ENCODE measurements at regions of chr5 and their contacts with region 1.

Region 1: DNA sequence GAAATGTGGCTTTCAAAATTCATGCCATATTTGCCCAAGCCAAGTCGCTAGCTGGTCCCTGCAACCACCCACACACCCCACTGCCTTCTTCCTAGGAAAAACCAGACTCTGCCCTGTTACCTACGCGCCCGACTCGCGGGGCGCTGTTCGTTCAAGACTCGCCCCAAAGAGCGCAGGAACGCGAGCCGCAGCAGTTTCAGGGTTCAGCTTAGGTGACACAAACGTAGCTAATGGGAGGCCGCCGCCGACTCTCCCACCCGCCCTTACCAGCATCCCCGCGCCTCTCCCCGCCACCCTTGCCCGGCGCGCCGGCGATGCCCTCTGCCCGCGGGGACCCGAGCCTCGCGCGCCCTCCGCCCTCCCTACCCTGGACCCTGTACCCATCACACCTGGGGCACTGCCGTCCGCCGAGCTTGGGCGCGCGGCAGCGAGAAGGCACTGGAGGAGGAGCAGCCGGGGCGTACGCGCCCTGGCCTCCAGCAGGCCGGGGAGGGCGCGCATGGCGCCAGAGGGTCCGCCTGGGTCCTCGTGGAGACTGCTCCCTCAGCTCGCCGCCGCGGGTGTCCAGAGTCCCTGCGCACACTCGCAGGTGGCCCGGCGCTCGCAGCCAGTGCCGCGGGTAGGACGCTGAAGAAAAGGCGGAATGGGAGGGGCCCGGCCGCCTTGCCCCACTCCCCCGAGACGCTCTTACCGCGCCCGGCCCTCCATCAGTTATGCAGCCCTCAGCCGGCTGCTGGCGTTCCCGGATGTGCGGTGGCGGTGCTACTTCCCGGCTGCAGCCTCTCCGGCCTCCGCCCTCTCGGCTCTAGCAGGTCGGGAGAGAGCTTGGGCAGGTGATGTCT is at the start of gene EMB:
- DNase-seq: peak; percentile 73
- ATAC-seq: peak; percentile 79
- H3K4me3 Mint-ChIP-seq: peak within 1 kb of the TSS; percentile 90
- H3K27ac Mint-ChIP-seq: peak within 1 kb of the TSS; percentile 98
- H3K4me1 Mint-ChIP-seq: peaks cover 64% of the 10 kb centered on the region
- H3K27me3 Mint-ChIP-seq: no peaks in the 10 kb centered on the region
- CTCF ChIP-seq: no peak
- total RNA-seq, gene EMB: 70.2 and 72.1 TPM in 2 replicates

Region 2: GRCh38 chr5:50415912-50416311 is 25.0 kb before region 1 on chr5:
- CTCF ChIA-PET with region 1: no interaction called
- POLR2A ChIA-PET with region 1: interaction called, 10 read pairs
- intact Hi-C with region 1: loop called (anchors 1 kb)
- DNase-seq: no peak
- ATAC-seq: peak; percentile 85
- H3K4me3 Mint-ChIP-seq: no peak overlapping the region
- H3K27ac Mint-ChIP-seq: peak overlapping the region; percentile 75
- H3K4me1 Mint-ChIP-seq: peaks cover 71% of the 10 kb centered on the region
- H3K27me3 Mint-ChIP-seq: no peaks in the 10 kb centered on the region
- CTCF ChIP-seq: no peak

Region 3: DNA sequence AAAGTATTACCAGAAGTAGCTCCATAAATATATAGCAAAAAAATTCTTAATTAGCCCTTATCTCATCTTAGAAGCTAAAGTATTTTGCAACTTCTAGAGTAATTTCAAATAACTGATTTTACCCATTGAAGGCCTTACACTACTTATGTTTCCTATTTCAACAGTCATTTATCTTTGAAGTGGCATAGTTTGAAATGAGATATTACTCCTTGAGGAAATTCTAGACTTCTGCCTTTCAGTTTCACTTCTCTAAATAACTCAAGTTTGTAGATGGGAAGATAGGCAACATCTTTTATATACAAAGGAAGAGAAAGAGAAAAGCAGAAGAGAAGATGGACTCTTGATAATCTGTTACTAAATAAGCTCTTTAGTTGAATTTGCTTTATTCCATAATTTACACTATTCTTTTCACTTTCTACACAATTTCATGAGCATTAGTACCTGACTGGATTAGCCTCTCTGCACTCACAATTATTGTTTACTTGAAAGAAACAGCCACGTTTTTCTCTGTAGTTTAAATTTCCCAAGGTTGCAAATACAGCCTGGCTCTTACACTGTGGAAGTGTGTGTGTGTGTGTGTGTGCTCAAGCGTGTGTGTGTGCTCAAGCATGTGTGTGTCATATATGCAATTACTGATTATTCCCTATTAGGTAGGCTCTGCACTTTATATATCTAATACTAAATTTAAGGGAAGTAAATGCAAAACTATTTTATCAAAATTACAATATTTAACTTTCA is 60.8 kb after region 1 on chr5:
- CTCF ChIA-PET with region 1: interaction called, 3 read pairs
- POLR2A ChIA-PET with region 1: interaction called, 13 read pairs
- intact Hi-C with region 1: loop called (anchors 1 kb)
- DNase-seq: no peak
- ATAC-seq: peak; percentile 92
- H3K4me3 Mint-ChIP-seq: peak overlapping the region; percentile 44
- H3K27ac Mint-ChIP-seq: peak overlapping the region; percentile 82
- H3K4me1 Mint-ChIP-seq: peaks cover 15% of the 10 kb centered on the region
- H3K27me3 Mint-ChIP-seq: no peaks in the 10 kb centered on the region
- CTCF ChIP-seq: no peak

Region 4: DNA sequence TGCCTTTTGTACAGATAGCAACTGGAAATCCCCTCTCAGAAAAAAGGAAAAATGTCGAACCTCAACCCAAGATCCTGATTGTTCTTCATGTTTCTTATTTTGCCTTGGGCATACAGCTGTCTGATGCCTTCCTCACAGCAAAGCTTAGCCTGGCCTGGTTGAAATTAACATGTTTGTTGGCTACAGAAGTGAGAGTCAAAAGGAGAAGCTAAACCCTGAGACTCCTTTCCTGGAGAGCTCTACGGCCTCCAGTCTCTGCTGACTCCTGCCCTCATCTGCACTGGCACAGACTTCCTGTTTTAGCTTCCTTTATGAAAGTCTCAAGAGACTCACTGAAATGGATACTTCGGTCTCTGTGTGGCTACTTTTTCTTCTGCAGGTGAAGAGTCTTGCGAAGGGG is 412.3 kb after region 1 on chr5:
- CTCF ChIA-PET with region 1: no interaction called
- POLR2A ChIA-PET with region 1: no interaction called
- intact Hi-C with region 1: loop called (anchors 5 kb)
- DNase-seq: peak; percentile 16
- ATAC-seq: peak; percentile 89
- H3K4me3 Mint-ChIP-seq: peak overlapping the region; percentile 33
- H3K27ac Mint-ChIP-seq: peak overlapping the region; percentile 38
- H3K4me1 Mint-ChIP-seq: peaks cover 57% of the 10 kb centered on the region
- H3K27me3 Mint-ChIP-seq: no peaks in the 10 kb centered on the region
- CTCF ChIP-seq: no peak

Region 5: GRCh38 chr5:50905996-50906570 is 465.2 kb after region 1 on chr5:
- CTCF ChIA-PET with region 1: no interaction called
- POLR2A ChIA-PET with region 1: no interaction called
- intact Hi-C with region 1: no loop called
- DNase-seq: no peak
- ATAC-seq: no peak
- H3K4me3 Mint-ChIP-seq: no peak overlapping the region
- H3K27ac Mint-ChIP-seq: no peak overlapping the region
- H3K4me1 Mint-ChIP-seq: no peaks in the 10 kb centered on the region
- H3K27me3 Mint-ChIP-seq: peaks cover 5% of the 10 kb centered on the region
- CTCF ChIP-seq: no peak

Measured in activated B cell treated with CpG ODN at 0.5 μM for 24 hours (primary cell).